ENCODE measurements at regions of chrX and their contacts with region 1.

Region 1: GRCh38 chrX:107731831-107732502 is 43.6 kb downstream of the TSC22D3 start:
- DNase-seq: no peak
- ATAC-seq: no peak
- H3K4me3 ChIP-seq: no peak overlapping the region
- H3K27ac ChIP-seq: no peak overlapping the region
- H3K4me1 ChIP-seq: no peaks in the 10 kb centered on the region
- H3K27me3 ChIP-seq: no peaks in the 10 kb centered on the region
- CTCF ChIP-seq: no peak
- EP300 ChIP-seq: no peak
- POLR2A ChIP-seq: no peak
- RAD21 ChIP-seq: no peak

Region 2: DNA sequence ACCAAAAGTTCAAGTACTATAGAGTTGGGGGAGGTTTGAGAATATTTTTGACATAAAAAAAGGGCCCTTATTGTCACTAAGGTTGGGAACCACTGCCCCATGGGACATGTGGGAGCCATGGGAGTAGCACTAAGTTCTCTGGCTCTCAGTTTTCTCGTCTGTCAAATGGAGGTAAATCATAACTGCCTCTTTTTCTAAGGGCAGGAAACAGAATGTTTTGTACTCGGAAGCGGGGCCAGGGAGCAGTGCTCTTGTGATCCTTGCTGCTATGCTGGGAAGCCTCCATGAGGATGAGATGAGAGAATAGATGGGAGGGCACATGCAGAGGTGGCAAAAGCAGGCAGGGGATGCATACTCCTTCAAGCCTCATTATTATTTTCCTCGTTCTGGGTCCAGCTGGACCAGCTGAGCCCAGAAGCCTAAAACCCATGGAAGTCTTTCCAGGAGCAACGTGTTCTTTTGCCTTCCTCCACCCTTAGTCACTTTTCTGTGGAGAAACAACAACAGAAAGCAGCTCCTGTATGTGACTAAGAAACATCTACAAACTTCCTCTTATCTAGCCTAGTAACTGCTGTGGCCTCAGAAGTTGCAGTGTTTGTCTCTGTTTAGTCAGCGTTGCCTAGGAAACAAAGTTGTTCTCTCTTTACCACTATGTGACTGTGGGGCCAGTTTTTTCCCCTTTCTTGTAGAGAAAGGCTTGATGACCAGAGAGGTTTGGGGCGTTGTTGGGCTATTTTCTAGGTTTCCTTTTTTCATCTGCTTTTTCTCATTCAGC is 21.2 kb before region 1 on chrX:
- CTCF ChIA-PET with region 1: interaction called, 3 read pairs
- POLR2A ChIA-PET with region 1: interaction called, 10 read pairs
- RAD21 ChIA-PET with region 1: interaction called, 42 read pairs
- SMC1A ChIA-PET with region 1: interaction called, 4 read pairs
- in situ Hi-C with region 1: no loop called
- intact Hi-C with region 1: no loop called
- DNase-seq: peak; percentile 87
- ATAC-seq: peak; percentile 74
- H3K4me3 ChIP-seq: peak overlapping the region; percentile 51; the same call in 1 of the 2 replicates
- H3K27ac ChIP-seq: peak overlapping the region; percentile 83
- H3K4me1 ChIP-seq: peaks cover 15% of the 10 kb centered on the region
- H3K27me3 ChIP-seq: no peaks in the 10 kb centered on the region
- CTCF ChIP-seq: no peak
- EP300 ChIP-seq: peak; percentile 66 to 97
- POLR2A ChIP-seq: no peak
- RAD21 ChIP-seq: no peak